MCF 10A (cell line): ENCODE measurements at regions of chr7 and their contacts with region 1.

Region 1: DNA sequence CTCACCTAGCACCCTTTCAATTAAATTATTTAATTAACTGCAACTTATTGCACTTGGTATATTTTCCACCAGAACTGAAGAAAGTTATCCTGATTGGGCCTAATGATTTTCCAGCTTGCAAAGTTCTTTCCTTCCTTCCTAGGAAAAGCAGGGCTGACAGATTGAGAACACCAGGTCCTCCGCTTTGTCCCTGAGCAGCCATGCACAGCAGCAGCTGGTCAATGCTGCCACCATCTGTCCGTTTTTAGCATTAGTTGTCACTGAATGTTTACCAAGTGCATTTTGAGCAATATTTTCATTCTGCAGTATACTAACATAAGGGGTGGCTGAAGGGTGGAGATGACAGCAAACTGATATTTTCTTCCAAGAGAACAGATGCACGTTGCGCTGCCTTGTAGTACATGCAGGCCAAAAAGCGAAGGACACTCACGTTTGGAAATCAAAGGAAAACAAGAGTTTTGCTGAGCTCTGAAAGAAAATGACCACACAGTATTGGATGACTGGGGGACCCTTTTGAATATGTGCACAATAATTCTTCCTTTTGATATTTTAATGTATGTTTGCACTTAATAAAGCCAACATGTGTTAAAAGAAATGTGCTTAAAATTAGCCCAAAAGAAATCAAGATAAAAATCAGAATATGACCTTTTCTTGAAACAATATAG is 248.8 kb upstream of the PTN start:
- DNase-seq: peak; percentile 70
- H3K4me3 Mint-ChIP-seq: no peak overlapping the region
- H3K27ac Mint-ChIP-seq: no peak overlapping the region
- H3K4me1 Mint-ChIP-seq: no peaks in the 10 kb centered on the region
- H3K27me3 Mint-ChIP-seq: peaks cover 14% of the 10 kb centered on the region
- CTCF ChIP-seq: peak; percentile 91

Region 2: GRCh38 chr7:136405931-136406777 is 1186.2 kb before region 1 on chr7:
- CTCF ChIA-PET with region 1: interaction called, 10 read pairs
- POLR2A ChIA-PET with region 1: no interaction called
- intact Hi-C with region 1: no loop called
- DNase-seq: peak; percentile 61
- H3K4me3 Mint-ChIP-seq: no peak overlapping the region
- H3K27ac Mint-ChIP-seq: no peak overlapping the region
- H3K4me1 Mint-ChIP-seq: no peaks in the 10 kb centered on the region
- H3K27me3 Mint-ChIP-seq: peaks cover 62% of the 10 kb centered on the region
- CTCF ChIP-seq: peak; percentile 72

Region 3: DNA sequence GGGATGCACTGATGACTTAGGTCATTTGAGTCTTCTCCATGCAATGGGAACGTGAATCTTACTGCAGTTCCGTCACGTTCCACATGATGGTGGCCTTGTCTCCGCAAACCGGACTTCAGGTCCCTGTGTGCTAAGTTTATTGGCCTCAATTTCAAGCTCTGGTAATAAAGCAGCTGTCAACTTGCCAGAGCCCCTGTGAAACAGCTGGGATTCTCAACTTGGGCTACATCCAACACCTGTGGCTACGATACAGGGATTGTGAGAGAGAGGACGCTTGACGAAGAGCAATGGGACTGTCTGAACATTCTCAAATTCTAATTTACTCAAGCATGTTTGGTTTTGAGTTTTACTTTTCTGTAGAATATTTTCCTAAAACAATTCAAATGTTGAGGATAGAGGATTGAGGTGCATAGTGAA is 423.1 kb before region 1 on chr7:
- CTCF ChIA-PET with region 1: interaction called, 12 read pairs
- POLR2A ChIA-PET with region 1: no interaction called
- intact Hi-C with region 1: loop called (anchors 1 kb)
- DNase-seq: peak; percentile 57
- H3K4me3 Mint-ChIP-seq: no peak overlapping the region
- H3K27ac Mint-ChIP-seq: no peak overlapping the region
- H3K4me1 Mint-ChIP-seq: no peaks in the 10 kb centered on the region
- H3K27me3 Mint-ChIP-seq: peaks cover 11% of the 10 kb centered on the region
- CTCF ChIP-seq: peak; percentile 50

Region 4: DNA sequence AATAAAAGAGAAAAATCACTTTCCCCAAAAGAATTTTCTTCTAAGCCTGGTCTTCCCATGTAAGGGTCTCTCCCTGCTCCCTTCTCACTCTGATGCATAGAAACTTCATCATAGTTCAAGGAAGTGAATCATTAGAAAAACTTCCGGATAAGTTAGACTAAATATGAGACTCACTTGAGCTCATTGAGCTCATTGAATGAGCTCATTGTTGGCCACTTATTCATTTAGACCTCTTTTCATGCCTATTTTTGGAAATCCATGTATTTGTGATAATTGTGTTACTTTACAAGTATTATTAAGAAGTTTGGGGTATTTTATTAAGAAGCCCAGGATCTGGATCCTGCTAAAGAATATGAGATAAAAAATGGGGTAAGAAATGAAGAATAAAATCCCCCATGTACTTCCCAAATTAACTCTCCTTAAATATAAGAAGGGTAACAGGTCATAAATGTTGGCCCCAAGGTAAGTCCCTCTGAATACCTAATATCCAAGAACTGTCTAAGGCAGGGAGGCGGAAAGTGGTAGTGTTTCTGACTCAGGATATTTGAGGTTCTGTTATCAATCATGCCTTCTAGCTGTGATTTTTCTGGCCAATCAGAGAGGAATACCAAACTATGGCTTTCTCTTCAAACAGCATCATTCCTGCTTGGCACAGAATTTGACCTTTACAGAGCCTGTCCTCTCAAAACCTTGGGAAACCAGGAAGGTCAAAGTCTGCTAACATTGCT is 12.3 kb before region 1 on chr7:
- CTCF ChIA-PET with region 1: interaction called, 25 read pairs
- POLR2A ChIA-PET with region 1: no interaction called
- intact Hi-C with region 1: no loop called
- DNase-seq: peak; percentile 39
- H3K4me3 Mint-ChIP-seq: no peak overlapping the region
- H3K27ac Mint-ChIP-seq: no peak overlapping the region
- H3K4me1 Mint-ChIP-seq: peaks cover 7% of the 10 kb centered on the region
- H3K27me3 Mint-ChIP-seq: no peaks in the 10 kb centered on the region
- CTCF ChIP-seq: no peak

Region 5: DNA sequence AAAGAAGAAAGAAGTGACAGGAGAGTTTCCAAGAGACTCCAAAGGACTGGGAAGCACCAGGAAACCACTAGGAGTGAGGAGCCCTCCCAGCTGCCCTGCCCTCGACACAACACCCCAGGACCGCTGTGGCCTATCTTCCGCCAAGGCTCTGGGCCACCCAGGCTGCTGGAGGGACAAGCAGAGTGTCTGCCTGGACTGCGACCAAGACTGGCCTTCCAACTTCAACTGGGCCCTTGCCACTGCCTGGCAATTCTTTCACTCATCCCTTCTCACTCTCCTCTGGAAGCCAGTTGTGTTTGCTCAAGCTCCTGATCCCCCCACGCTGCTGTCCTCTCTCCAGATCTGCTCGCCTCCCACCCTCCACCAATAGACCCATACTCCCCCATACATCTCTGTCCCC is 1378.6 kb after region 1 on chr7:
- CTCF ChIA-PET with region 1: no interaction called
- POLR2A ChIA-PET with region 1: no interaction called
- intact Hi-C with region 1: no loop called
- DNase-seq: no peak
- H3K4me3 Mint-ChIP-seq: no peak overlapping the region
- H3K27ac Mint-ChIP-seq: no peak overlapping the region
- H3K4me1 Mint-ChIP-seq: no peaks in the 10 kb centered on the region
- H3K27me3 Mint-ChIP-seq: no peaks in the 10 kb centered on the region
- CTCF ChIP-seq: no peak